ENCODE measurements at regions of chr1 and their contacts with region 1.

Region 1: DNA sequence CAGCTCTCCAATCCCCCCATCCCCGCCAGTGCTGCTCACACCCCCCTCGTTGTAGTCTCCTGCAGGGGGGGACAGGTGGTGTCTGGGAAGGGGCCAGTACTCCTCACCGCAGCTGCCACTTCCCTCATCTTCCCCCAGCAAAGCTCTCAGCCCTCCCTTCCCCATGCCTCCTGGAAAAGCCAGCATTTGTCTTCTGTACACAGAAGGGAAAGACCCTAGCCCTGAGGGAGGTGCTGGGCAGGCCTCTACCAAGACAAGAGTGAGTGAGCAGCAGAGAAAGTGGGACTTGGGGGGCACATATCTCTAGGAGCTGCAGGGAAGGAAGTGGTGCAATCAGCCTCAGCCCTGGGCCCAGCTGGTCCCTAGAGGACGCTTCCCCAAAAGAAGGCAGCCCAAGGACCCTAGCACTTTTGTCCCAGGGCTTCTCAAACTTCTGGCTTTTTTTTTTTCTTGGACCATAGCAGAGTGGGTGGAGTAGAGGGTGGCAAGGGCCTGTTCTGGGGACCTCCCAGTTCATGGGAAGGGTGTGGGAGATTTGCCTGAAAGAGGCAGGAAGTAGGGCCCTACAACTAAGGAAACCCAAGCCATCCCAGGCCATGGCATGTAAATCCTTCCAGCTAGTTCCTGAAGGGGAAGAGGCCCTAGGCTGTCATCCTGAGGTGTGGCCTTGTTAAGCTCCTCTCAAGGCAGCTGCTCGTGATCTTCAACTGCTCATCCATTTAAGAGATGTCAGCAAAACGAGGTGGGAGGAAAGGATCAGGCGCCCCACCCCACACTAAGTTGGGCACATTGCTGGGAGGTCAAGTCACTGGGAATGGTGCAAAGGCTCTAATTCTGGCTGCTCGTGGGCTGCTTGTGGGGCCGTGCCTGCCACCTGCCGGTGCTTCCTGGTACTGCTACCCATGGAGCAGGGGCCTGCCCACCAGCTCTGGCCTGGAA is 12.6 kb downstream of the ZC3H12A start:
- DNase-seq: peak; percentile 83
- H3K4me3 ChIP-seq: peak overlapping the region in 1 of 2 experiments; percentile 1; a peak in 1 of 4 replicates
- H3K27ac ChIP-seq: peak overlapping the region; percentile 5 to 13; a peak in 1 of 4 replicates
- H3K4me1 ChIP-seq: peaks cover 0 to 30% of the 10 kb centered on the region in 2 experiments; a peak in 1 of 4 replicates
- H3K27me3 ChIP-seq: no peaks in the 10 kb centered on the region
- CTCF ChIP-seq: peak; percentile 97
- EP300 ChIP-seq: no peak
- RAD21 ChIP-seq: peak; percentile 83

Region 2: GRCh38 chr1:37449936-37450335 is 37.0 kb before region 1 on chr1:
- CTCF ChIA-PET with region 1: interaction called, 481 read pairs
- POLR2A ChIA-PET with region 1: no interaction called
- DNase-seq: no peak
- H3K4me3 ChIP-seq: no peak overlapping the region
- H3K27ac ChIP-seq: no peak overlapping the region
- H3K4me1 ChIP-seq: no peaks in the 10 kb centered on the region; a peak in 1 of 4 replicates
- H3K27me3 ChIP-seq: no peaks in the 10 kb centered on the region
- CTCF ChIP-seq: no peak
- EP300 ChIP-seq: no peak
- RAD21 ChIP-seq: no peak

Region 3: GRCh38 chr1:37474046-37474759 is 12.7 kb before region 1 on chr1 and contains the start of gene ZC3H12A:
- CTCF ChIA-PET with region 1: interaction called, 123 read pairs
- POLR2A ChIA-PET with region 1: interaction called, 16 read pairs
- DNase-seq: peak; percentile 98
- H3K4me3 ChIP-seq: peak within 1 kb of the TSS; percentile 82 to 94
- H3K27ac ChIP-seq: peak within 1 kb of the TSS; percentile 60 to 96
- H3K4me1 ChIP-seq: peaks cover 66% of the 10 kb centered on the region in 2 experiments
- H3K27me3 ChIP-seq: no peaks in the 10 kb centered on the region
- CTCF ChIP-seq: no peak
- EP300 ChIP-seq: no peak
- RAD21 ChIP-seq: no peak
- polyA plus RNA-seq, gene ZC3H12A: 7.4 and 8.9 TPM in 2 replicates

Region 4: GRCh38 chr1:37498872-37499617 is 12.1 kb after region 1 on chr1:
- CTCF ChIA-PET with region 1: interaction called, 40 read pairs
- POLR2A ChIA-PET with region 1: no interaction called
- DNase-seq: peak; percentile 53
- H3K4me3 ChIP-seq: no peak overlapping the region
- H3K27ac ChIP-seq: peak overlapping the region; percentile 56 to 70
- H3K4me1 ChIP-seq: peaks cover 9 to 19% of the 10 kb centered on the region in 2 experiments
- H3K27me3 ChIP-seq: no peaks in the 10 kb centered on the region
- CTCF ChIP-seq: no peak
- EP300 ChIP-seq: no peak
- RAD21 ChIP-seq: no peak

Region 5: GRCh38 chr1:37509181-37509580 is 22.2 kb after region 1 on chr1:
- CTCF ChIA-PET with region 1: interaction called, 33 read pairs
- POLR2A ChIA-PET with region 1: interaction called, 5 read pairs
- DNase-seq: peak; percentile 15
- H3K4me3 ChIP-seq: no peak overlapping the region
- H3K27ac ChIP-seq: no peak overlapping the region
- H3K4me1 ChIP-seq: peaks cover 0 to 7% of the 10 kb centered on the region in 2 experiments; a peak in 1 of 4 replicates
- H3K27me3 ChIP-seq: no peaks in the 10 kb centered on the region
- CTCF ChIP-seq: peak; percentile 49
- EP300 ChIP-seq: no peak
- RAD21 ChIP-seq: no peak

Region 6: GRCh38 chr1:37514350-37515184 is 27.6 kb after region 1 on chr1 and contains the start of gene MEAF6:
- CTCF ChIA-PET with region 1: interaction called, 33 read pairs
- POLR2A ChIA-PET with region 1: interaction called, 5 read pairs
- DNase-seq: peak; percentile 98
- H3K4me3 ChIP-seq: peak within 1 kb of the TSS; percentile 83 to 96
- H3K27ac ChIP-seq: peak within 1 kb of the TSS; percentile 94 to 97
- H3K4me1 ChIP-seq: peaks cover 0 to 15% of the 10 kb centered on the region in 2 experiments; a peak in 1 of 4 replicates
- H3K27me3 ChIP-seq: no peaks in the 10 kb centered on the region
- CTCF ChIP-seq: peak; percentile 70
- EP300 ChIP-seq: no peak
- RAD21 ChIP-seq: no peak
- polyA plus RNA-seq, gene MEAF6: 47.2 and 60.5 TPM in 2 replicates